ENCODE measurements at regions of chr17 and their contacts with region 1.

Region 1: DNA sequence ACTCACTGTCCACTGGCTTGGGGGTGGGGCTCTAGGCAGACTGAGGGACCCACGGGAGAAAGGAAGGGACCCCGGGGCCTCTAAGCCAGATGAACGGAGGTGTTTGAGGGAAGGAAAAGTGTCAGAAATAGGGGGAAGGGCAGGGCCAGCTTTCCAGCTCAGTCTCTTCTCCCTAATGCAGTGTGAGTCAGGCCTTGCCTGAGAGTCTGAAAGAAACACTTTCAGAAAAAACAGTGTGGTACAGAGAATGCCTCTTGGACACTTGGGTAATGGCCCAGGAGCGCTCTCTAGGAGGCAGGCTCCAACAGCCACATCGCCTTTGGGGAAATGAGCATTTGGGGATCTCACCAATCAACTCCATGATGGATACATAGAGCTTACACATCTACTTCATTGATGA is 46.9 kb downstream of the NDEL1 start:
- DNase-seq: no peak
- H3K4me3 ChIP-seq: no peak overlapping the region
- H3K27ac ChIP-seq: no peak overlapping the region
- H3K4me1 ChIP-seq: no peaks in the 10 kb centered on the region
- H3K27me3 ChIP-seq: no peaks in the 10 kb centered on the region
- CTCF ChIP-seq: no peak

Region 2: DNA sequence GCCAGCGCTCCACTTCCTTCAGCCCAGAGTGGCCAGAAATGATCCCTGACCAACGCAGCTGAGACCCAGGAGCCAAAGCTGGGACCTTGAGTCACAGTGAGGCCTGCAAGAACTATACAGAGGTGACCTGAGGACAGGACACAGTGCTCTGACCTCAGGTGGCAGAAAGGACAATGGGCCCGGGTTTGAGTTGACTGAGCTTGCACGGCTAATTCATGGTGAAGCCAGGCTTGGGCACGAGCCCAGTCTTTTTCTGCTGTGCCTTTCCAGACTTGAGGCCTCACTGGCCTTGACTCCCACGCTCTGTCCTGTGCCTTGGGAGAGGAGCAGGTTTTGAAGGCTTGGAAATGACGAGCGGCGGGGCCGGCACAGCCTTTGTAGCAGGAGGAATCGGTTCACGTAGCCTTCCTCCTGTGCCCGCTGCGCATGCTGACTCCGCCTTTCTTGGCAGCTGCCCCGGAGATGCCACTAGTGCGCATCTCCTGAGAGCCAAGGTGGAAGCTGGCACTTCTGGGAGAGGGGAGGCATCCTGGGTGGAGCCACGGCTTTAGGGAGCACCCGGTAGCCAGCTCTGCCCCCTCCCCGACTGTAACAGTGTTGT is 12.0 kb before region 1 on chr17:
- CTCF ChIA-PET with region 1: no interaction called
- POLR2A ChIA-PET with region 1: interaction called, 10 read pairs
- intact Hi-C with region 1: no loop called
- DNase-seq: peak; percentile 68
- H3K4me3 ChIP-seq: no peak overlapping the region
- H3K27ac ChIP-seq: no peak overlapping the region
- H3K4me1 ChIP-seq: peaks cover 16% of the 10 kb centered on the region
- H3K27me3 ChIP-seq: no peaks in the 10 kb centered on the region
- CTCF ChIP-seq: no peak

Region 3: GRCh38 chr17:8506145-8506544 is 23.6 kb after region 1 on chr17:
- CTCF ChIA-PET with region 1: interaction called, 3 read pairs
- POLR2A ChIA-PET with region 1: interaction called, 10 read pairs
- intact Hi-C with region 1: no loop called
- DNase-seq: no peak
- H3K4me3 ChIP-seq: no peak overlapping the region
- H3K27ac ChIP-seq: no peak overlapping the region
- H3K4me1 ChIP-seq: no peaks in the 10 kb centered on the region
- H3K27me3 ChIP-seq: no peaks in the 10 kb centered on the region
- CTCF ChIP-seq: no peak

Measured in A673 (cell line).